ENCODE measurements at regions of chr17 and their contacts with region 1.

Region 1: DNA sequence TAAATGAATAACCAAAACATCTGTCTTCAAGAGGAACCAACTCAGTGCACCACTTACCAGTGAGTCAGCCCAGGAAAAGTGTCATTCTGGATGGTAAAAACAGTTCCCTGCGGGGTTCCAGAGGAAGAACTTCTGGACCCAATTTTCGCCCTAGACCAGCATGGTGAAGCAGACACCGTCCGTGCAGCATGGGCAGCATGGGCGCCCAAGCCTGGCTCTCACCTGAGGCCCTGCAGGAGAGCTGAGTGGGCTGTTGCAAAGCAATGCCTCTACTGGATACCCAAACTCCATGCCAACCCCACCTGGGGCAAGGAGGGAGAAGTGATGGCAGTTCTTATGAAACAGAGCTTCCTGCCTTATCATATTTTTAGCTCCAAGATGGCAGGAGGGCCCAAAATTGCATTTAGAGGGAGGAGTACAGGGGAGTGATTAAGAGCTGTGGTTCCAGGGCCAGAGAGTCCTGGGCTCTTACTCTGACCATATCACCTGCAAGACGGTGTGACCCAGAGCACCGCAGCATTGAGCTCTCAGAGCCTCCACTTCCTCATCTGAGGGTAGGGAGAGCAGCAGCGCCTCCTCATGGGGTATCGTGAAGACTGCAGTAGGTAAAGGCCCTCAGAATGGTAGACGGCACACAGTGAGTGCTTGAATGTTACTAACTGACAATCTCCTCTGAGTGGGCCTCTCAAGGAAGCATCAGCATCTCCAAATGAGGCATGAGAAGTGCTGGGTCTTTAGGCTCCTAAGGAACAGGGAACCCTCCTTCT is 16.6 kb upstream of the INPP5K start:
- DNase-seq: peak; percentile 41 to 51 (median 48)
- H3K4me3 ChIP-seq: no peak overlapping the region
- H3K4me3 Mint-ChIP-seq: no peak overlapping the region
- H3K27ac ChIP-seq: peak overlapping the region in 1 of 2 donors; percentile 20
- H3K27ac Mint-ChIP-seq: peak overlapping the region in 3 of 7 donors; percentile 24 to 66 (median 26)
- H3K4me1 ChIP-seq: no peaks in the 10 kb centered on the region
- H3K4me1 Mint-ChIP-seq: peaks cover 6% of the 10 kb centered on the region
- H3K27me3 ChIP-seq: no peaks in the 10 kb centered on the region
- H3K27me3 Mint-ChIP-seq: peaks cover 0 to 3% (median 2%) of the 10 kb centered on the region in 3 donors
- CTCF ChIP-seq: peak; percentile 69

Region 2: GRCh38 chr17:1216217-1217088 is 316.6 kb before region 1 on chr17:
- intact Hi-C with region 1: no loop called
- DNase-seq: no peak
- H3K4me3 ChIP-seq: no peak overlapping the region
- H3K4me3 Mint-ChIP-seq: no peak overlapping the region
- H3K27ac ChIP-seq: no peak overlapping the region
- H3K27ac Mint-ChIP-seq: peak overlapping the region in 4 of 7 donors; percentile 11 to 59 (median 30)
- H3K4me1 ChIP-seq: peaks cover 25 to 26% of the 10 kb centered on the region in 2 donors
- H3K4me1 Mint-ChIP-seq: peaks cover 44% of the 10 kb centered on the region
- H3K27me3 ChIP-seq: no peaks in the 10 kb centered on the region
- H3K27me3 Mint-ChIP-seq: peaks cover 0 to 2% (median 2%) of the 10 kb centered on the region in 3 donors
- CTCF ChIP-seq: no peak

Region 3: DNA sequence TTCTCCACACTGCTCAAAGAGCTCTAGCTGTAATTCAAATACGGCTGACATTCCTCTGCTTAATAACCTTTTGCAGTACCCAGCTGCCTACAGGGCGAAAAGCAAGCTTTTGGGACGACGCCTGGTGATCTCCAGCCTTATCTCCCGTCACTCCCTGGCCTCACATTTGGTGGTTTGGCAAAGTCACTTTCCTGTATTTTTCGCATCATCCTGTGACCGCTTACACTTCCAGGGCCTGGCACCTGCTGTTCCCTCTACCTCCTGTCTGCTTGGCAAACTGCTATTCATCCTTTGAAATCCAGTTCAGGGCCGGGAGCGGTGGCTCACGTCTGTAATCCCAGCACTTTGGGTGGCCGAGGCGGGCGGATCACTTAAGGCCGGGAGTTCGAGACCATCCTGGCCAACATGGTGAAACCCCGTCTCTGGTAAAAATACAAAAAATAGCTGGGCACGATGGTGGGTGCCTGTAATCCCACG is 265.5 kb before region 1 on chr17:
- intact Hi-C with region 1: loop called (anchors 10 kb)
- DNase-seq: no peak
- H3K4me3 ChIP-seq: peak overlapping the region; percentile 40 to 87 (median 83)
- H3K4me3 Mint-ChIP-seq: peak overlapping the region; percentile 80 to 86
- H3K27ac ChIP-seq: peak overlapping the region; percentile 72 to 79
- H3K27ac Mint-ChIP-seq: peak overlapping the region in 5 of 7 donors; percentile 12 to 86 (median 60)
- H3K4me1 ChIP-seq: peaks cover 11 to 15% of the 10 kb centered on the region in 2 donors
- H3K4me1 Mint-ChIP-seq: peaks cover 15% of the 10 kb centered on the region
- H3K27me3 ChIP-seq: peaks cover 10 to 31% of the 10 kb centered on the region in 2 donors
- H3K27me3 Mint-ChIP-seq: peaks cover 33 to 57% (median 51%) of the 10 kb centered on the region in 3 donors
- CTCF ChIP-seq: no peak

Region 4: GRCh38 chr17:1275962-1276736 is 256.9 kb before region 1 on chr17:
- intact Hi-C with region 1: loop called in 1 of 2 experiments (anchors 10 kb)
- DNase-seq: peak; percentile 38 to 58 (median 47)
- H3K4me3 ChIP-seq: no peak overlapping the region
- H3K4me3 Mint-ChIP-seq: peak overlapping the region in 1 of 2 donors; percentile 60
- H3K27ac ChIP-seq: no peak overlapping the region
- H3K27ac Mint-ChIP-seq: peak overlapping the region in 1 of 7 donors; percentile 32
- H3K4me1 ChIP-seq: no peaks in the 10 kb centered on the region
- H3K4me1 Mint-ChIP-seq: peaks cover 8% of the 10 kb centered on the region
- H3K27me3 ChIP-seq: peaks cover 0 to 42% of the 10 kb centered on the region in 2 donors
- H3K27me3 Mint-ChIP-seq: peaks cover 49 to 71% (median 53%) of the 10 kb centered on the region in 3 donors
- CTCF ChIP-seq: peak; percentile 88

Region 5: DNA sequence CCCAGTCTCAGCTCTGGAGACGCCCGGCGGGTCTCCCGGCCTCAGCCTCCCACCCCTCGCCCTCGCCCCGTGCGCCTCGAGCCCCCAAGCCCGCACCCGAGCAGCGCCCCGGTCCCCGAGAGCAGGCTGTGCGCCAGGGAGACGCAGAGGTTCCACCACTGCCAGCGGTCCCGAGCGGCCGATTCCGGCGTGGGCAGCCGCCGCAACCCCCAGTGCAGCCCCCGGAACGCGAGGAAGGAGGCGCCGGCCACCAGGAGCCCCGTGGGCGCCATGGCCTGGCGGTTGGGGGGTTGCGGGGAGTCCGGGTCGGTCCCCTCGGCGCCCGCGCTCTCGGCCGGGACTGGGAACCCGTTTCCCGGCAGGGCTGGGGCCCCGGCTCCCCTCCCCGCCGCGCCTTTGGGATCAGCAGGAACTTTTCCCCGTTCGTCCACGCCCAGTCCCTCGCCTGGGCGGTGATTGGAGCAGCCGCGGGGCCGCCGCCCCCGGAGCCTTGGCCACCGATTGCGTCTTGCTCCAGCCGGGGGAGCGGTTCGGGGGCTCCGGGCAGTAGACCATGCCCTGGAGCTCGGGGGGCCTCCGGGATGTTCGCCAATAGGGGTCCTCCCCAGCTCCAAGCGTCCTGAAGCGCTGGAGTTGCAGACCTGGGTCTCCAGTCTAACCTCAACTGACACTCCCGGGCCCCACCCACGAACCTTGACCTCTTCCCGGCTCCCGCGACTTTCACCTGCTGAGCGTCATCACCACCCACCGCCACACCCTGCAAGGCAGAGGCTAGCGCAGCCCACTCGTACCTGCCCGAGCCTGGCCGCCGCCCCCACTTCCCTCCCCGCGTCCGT is 177.2 kb after region 1 on chr17 and contains the start of gene TLCD2:
- intact Hi-C with region 1: no loop called
- DNase-seq: no peak
- H3K4me3 ChIP-seq: peak within 1 kb of the TSS; percentile 31 to 73 (median 40)
- H3K4me3 Mint-ChIP-seq: peak within 1 kb of the TSS; percentile 69 to 89
- H3K27ac ChIP-seq: no peak within 1 kb of the TSS
- H3K27ac Mint-ChIP-seq: peak within 1 kb of the TSS in 1 of 7 donors; percentile 63
- H3K4me1 ChIP-seq: peaks cover 32 to 38% of the 10 kb centered on the region in 2 donors
- H3K4me1 Mint-ChIP-seq: peaks cover 37% of the 10 kb centered on the region
- H3K27me3 ChIP-seq: peaks cover 0 to 31% of the 10 kb centered on the region in 2 donors
- H3K27me3 Mint-ChIP-seq: peaks cover 31 to 74% (median 39%) of the 10 kb centered on the region in 3 donors
- CTCF ChIP-seq: no peak
- polyA plus RNA-seq, gene TLCD2: 0.03 TPM in 1 of 3 donors, not detected in the others